ENCODE measurements at regions of chr12 and their contacts with region 1.

Region 1: GRCh38 chr12:42608196-42608825 is 18.8 kb upstream of the PRICKLE1 start:
- DNase-seq: no peak
- ATAC-seq: no peak
- H3K4me3 ChIP-seq: no peak overlapping the region
- H3K27ac ChIP-seq: no peak overlapping the region
- H3K4me1 ChIP-seq: no peaks in the 10 kb centered on the region
- H3K27me3 ChIP-seq: no peaks in the 10 kb centered on the region; a peak in 1 of 4 replicates
- CTCF ChIP-seq: no peak
- EP300 ChIP-seq: no peak
- POLR2A ChIP-seq: no peak
- RAD21 ChIP-seq: no peak

Region 2: GRCh38 chr12:42631513-42631912 is 23.2 kb after region 1 on chr12:
- CTCF ChIA-PET with region 1: no interaction called
- POLR2A ChIA-PET with region 1: no interaction called
- RAD21 ChIA-PET with region 1: no interaction called
- SMC1A ChIA-PET with region 1: interaction called, 10 read pairs
- in situ Hi-C with region 1: no loop called
- intact Hi-C with region 1: no loop called
- DNase-seq: no peak
- ATAC-seq: no peak
- H3K4me3 ChIP-seq: no peak overlapping the region
- H3K27ac ChIP-seq: no peak overlapping the region
- H3K4me1 ChIP-seq: no peaks in the 10 kb centered on the region
- H3K27me3 ChIP-seq: no peaks in the 10 kb centered on the region
- CTCF ChIP-seq: no peak
- EP300 ChIP-seq: no peak
- POLR2A ChIP-seq: no peak
- RAD21 ChIP-seq: no peak